ENCODE measurements at regions of chr11 and their contacts with region 1.

Region 1: GRCh38 chr11:111601979-111602864 is at the start of gene SIK2:
- DNase-seq: peak; percentile 96 to 97 (median 97)
- ATAC-seq: peak; percentile 95 to 98 (median 96)
- H3K4me3 ChIP-seq: peak within 1 kb of the TSS; percentile 69 to 96 (median 87)
- H3K27ac ChIP-seq: peak within 1 kb of the TSS; percentile 91 to 99 (median 96)
- H3K4me1 ChIP-seq: peaks cover 3 to 45% (median 25%) of the 10 kb centered on the region in 12 donors
- H3K27me3 ChIP-seq: no peaks in the 10 kb centered on the region
- CTCF ChIP-seq: peak; percentile 77 to 98 (median 96)
- POLR2A ChIP-seq: peak in 1 of 2 donors; percentile 51
- total RNA-seq, gene SIK2: 15.9 to 45.8 (median 27.7) TPM

Region 2: GRCh38 chr11:111469200-111469599 is 133.0 kb before region 1 on chr11:
- intact Hi-C with region 1: no loop called
- DNase-seq: no peak
- ATAC-seq: no peak
- H3K4me3 ChIP-seq: no peak overlapping the region
- H3K27ac ChIP-seq: peak overlapping the region in 1 of 12 donors; percentile 13
- H3K4me1 ChIP-seq: peaks cover 0 to 9% (median 0%) of the 10 kb centered on the region in 12 donors
- H3K27me3 ChIP-seq: peaks cover 0 to 9% (median 0%) of the 10 kb centered on the region in 9 donors
- CTCF ChIP-seq: no peak
- POLR2A ChIP-seq: no peak

Region 3: DNA sequence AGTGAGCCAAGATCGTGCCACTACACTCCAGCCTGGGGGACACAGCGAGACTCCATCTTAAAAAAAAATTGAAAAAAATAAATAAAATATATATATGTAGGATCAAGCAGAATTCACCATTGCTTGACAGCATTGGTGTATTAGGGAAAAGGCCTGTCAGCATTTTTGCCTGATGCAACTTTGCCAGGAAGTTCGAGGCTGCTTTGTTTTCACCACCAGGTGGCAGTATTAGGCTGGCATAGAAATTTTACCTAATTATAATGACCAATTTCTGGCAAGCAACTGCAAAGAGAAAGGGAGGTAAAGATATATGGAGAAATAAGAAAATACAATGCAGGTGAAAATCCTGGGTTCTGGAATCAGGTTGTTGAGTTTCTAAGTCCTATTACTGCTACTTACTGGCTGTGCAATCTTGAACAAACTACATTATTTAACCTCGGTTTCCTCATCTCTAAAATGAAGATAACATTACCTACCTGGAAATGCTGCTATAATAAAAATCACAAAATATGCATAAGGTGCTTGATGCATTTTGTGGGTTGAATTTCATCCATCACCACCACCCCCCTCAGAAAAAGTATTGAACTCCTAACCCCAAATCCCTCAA is 37.0 kb before region 1 on chr11:
- intact Hi-C with region 1: loop called in 1 of 10 experiments (anchors 5 kb)
- DNase-seq: peak in 4 of 5 donors; percentile 48 to 64 (median 56)
- ATAC-seq: peak in 2 of 4 donors; percentile 52 to 63
- H3K4me3 ChIP-seq: no peak overlapping the region
- H3K27ac ChIP-seq: no peak overlapping the region
- H3K4me1 ChIP-seq: peaks cover 0 to 15% (median 0%) of the 10 kb centered on the region in 12 donors
- H3K27me3 ChIP-seq: no peaks in the 10 kb centered on the region
- CTCF ChIP-seq: peak; percentile 77 to 96 (median 92)
- POLR2A ChIP-seq: no peak

Region 4: DNA sequence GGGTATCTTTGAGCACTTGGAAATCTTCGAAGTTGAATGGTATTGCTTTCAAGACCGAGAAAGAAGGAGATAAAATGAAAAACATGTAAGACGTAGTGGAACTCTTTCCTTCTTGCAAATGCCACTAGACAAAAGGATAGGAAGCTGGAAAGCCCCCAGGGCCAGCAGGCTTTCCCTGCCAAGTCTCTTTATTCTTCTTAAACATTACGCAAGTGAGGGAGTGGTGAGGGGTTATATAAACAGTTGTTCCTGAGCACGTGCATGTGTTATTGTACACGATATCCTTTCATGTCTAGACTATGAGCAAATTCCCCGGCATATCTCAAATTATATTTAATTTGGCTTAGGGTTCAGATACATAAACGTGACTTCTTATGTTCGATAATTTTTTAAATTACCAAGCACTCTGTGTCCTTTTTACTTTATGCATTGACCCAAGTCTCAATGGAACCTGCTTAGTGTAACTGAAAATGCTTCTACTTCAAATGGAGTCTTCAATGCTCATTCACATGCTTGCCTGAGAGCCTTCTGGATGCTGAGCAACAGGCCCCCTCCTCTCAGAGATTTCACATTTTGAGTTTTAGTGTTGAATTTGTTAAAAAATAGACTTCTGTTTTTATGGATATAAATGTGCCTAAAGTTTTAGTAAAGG is 104.9 kb after region 1 on chr11:
- intact Hi-C with region 1: loop called in 1 of 10 experiments (anchors 10 kb)
- DNase-seq: peak in 4 of 5 donors; percentile 51 to 64 (median 55)
- ATAC-seq: peak; percentile 39 to 90 (median 66)
- H3K4me3 ChIP-seq: peak overlapping the region in 1 of 12 donors; percentile 11
- H3K27ac ChIP-seq: peak overlapping the region in 11 of 12 donors; percentile 17 to 66 (median 41)
- H3K4me1 ChIP-seq: peaks cover 0 to 22% (median 10%) of the 10 kb centered on the region in 12 donors
- H3K27me3 ChIP-seq: no peaks in the 10 kb centered on the region
- CTCF ChIP-seq: no peak
- POLR2A ChIP-seq: no peak

Region 5: GRCh38 chr11:111766093-111766833 is 164.0 kb after region 1 on chr11 and contains the start of gene PPP2R1B:
- intact Hi-C with region 1: loop called in 3 of 10 experiments (anchors 2 to 5 kb)
- DNase-seq: peak; percentile 74 to 88 (median 81)
- ATAC-seq: peak; percentile 92 to 99 (median 98)
- H3K4me3 ChIP-seq: peak within 1 kb of the TSS; percentile 66 to 99 (median 90)
- H3K27ac ChIP-seq: peak within 1 kb of the TSS; percentile 66 to 91 (median 84)
- H3K4me1 ChIP-seq: peaks cover 0 to 51% (median 17%) of the 10 kb centered on the region in 12 donors
- H3K27me3 ChIP-seq: no peaks in the 10 kb centered on the region
- CTCF ChIP-seq: no peak
- POLR2A ChIP-seq: peak in 1 of 2 donors; percentile 36
- total RNA-seq, gene PPP2R1B: 6.8 to 99.9 (median 11.8) TPM

Region 6: DNA sequence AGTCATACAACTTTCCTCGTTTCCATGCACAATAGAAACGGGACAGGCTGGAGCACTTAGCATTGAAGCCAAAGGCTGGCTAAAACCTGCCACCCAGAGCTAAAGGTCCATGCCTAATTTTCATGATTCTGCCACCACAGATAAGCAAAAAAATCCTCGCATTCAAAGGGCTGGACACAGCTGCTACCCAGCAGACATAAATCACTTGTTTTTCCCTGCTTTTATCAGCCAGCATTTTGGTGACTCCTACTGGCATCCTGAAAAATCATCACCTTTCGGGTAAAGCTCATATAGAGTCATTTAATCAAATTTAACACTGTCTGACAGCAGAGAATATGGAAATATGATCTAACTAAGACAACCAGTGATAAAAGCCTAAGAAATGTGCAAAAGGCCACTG is 231.3 kb after region 1 on chr11:
- intact Hi-C with region 1: loop called in 1 of 10 experiments (anchors 5 kb)
- DNase-seq: no peak
- ATAC-seq: peak in 1 of 4 donors; percentile 47
- H3K4me3 ChIP-seq: no peak overlapping the region
- H3K27ac ChIP-seq: no peak overlapping the region
- H3K4me1 ChIP-seq: peaks cover 0 to 7% (median 0%) of the 10 kb centered on the region in 12 donors
- H3K27me3 ChIP-seq: no peaks in the 10 kb centered on the region
- CTCF ChIP-seq: peak in 7 of 12 donors; percentile 10 to 41 (median 21)
- POLR2A ChIP-seq: no peak